Body of pancreas (tissue), 4 donors: ENCODE measurements at regions of chr6 and their contacts with region 1.

Region 1: GRCh38 chr6:166775180-166776081 is 148.4 kb upstream of the RPS6KA2 start:
- DNase-seq: peak; percentile 49 to 67 (median 64)
- ATAC-seq: no peak
- H3K4me3 ChIP-seq: no peak overlapping the region
- H3K27ac ChIP-seq: no peak overlapping the region
- H3K4me1 ChIP-seq: no peaks in the 10 kb centered on the region
- H3K27me3 ChIP-seq: no peaks in the 10 kb centered on the region
- CTCF ChIP-seq: peak; percentile 64 to 91 (median 78)
- POLR2A ChIP-seq: no peak

Region 2: DNA sequence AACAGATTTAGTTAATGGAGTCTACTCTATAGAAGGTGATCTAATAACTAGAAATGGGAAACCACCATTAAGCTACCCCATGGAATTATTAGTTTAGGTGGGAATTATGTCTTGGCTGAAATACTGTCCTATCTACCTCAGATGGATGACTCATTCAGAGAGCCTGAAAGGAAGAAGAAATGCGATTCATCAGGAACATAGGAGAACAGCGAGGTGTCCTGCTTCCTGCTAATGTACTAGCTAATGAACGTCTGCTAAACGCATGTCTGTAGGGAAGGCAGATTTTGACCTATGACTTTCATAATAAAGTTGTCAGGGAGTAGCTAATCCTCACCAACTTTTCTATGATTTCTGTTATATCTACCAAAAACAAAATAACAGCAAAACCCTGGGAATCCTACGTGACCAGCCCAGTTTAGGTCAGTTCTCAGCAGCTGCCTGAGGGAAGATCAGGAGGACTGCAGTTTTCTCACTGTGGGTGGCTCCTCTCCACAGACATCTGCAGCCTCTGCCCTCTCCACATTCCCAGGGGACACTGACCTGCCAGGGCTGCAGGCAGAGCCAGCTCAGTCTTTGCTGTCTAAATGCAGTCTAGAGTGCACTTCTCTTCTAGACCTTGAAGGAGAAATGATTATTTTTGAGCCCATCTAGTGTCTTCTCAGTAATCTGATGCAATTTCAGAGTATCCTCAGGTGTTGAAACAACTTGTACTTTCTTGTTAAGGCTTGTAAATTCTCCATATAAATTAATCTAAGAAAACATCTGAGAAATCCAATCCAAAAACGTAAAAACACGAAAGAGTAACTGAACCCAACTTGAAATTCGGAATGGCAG is 415.0 kb before region 1 on chr6:
- intact Hi-C with region 1: no loop called
- DNase-seq: no peak
- ATAC-seq: no peak
- H3K4me3 ChIP-seq: no peak overlapping the region
- H3K27ac ChIP-seq: no peak overlapping the region
- H3K4me1 ChIP-seq: no peaks in the 10 kb centered on the region
- H3K27me3 ChIP-seq: no peaks in the 10 kb centered on the region
- CTCF ChIP-seq: no peak
- POLR2A ChIP-seq: no peak

Region 3: GRCh38 chr6:166586424-166587156 is 188.8 kb before region 1 on chr6 and contains the start of gene RAMACL:
- intact Hi-C with region 1: no loop called
- DNase-seq: peak in 3 of 4 donors; percentile 34 to 62 (median 45)
- ATAC-seq: peak; percentile 62
- H3K4me3 ChIP-seq: no peak within 1 kb of the TSS
- H3K27ac ChIP-seq: no peak within 1 kb of the TSS
- H3K4me1 ChIP-seq: no peaks in the 10 kb centered on the region
- H3K27me3 ChIP-seq: no peaks in the 10 kb centered on the region
- CTCF ChIP-seq: no peak
- POLR2A ChIP-seq: no peak
- total RNA-seq, gene RAMACL: 0.99 to 10.9 TPM

Region 4: GRCh38 chr6:166989427-166990032 is 214.1 kb after region 1 on chr6:
- intact Hi-C with region 1: loop called (anchors 10 kb)
- DNase-seq: peak in 2 of 4 donors; percentile 13 to 19
- ATAC-seq: no peak
- H3K4me3 ChIP-seq: no peak overlapping the region
- H3K27ac ChIP-seq: no peak overlapping the region
- H3K4me1 ChIP-seq: no peaks in the 10 kb centered on the region
- H3K27me3 ChIP-seq: no peaks in the 10 kb centered on the region
- CTCF ChIP-seq: peak; percentile 17 to 59 (median 47)
- POLR2A ChIP-seq: no peak

Region 5: GRCh38 chr6:167141667-167142432 is 366.4 kb after region 1 on chr6:
- intact Hi-C with region 1: loop called (anchors 10 kb)
- DNase-seq: peak; percentile 28 to 56 (median 42)
- ATAC-seq: peak; percentile 77
- H3K4me3 ChIP-seq: no peak overlapping the region
- H3K27ac ChIP-seq: no peak overlapping the region
- H3K4me1 ChIP-seq: no peaks in the 10 kb centered on the region
- H3K27me3 ChIP-seq: no peaks in the 10 kb centered on the region
- CTCF ChIP-seq: peak; percentile 40 to 71 (median 57)
- POLR2A ChIP-seq: no peak